ENCODE measurements at regions of chr7 and their contacts with region 1.

Region 1: GRCh38 chr7:129218514-129219062 is 6.2 kb upstream of the AHCYL2 start:
- DNase-seq: peak; percentile 90
- ATAC-seq: peak; percentile 91
- H3K4me3 Mint-ChIP-seq: no peak overlapping the region
- H3K27ac Mint-ChIP-seq: no peak overlapping the region
- H3K4me1 Mint-ChIP-seq: peaks cover 7% of the 10 kb centered on the region
- H3K27me3 Mint-ChIP-seq: peaks cover 4% of the 10 kb centered on the region
- CTCF ChIP-seq: peak; percentile 94

Region 2: DNA sequence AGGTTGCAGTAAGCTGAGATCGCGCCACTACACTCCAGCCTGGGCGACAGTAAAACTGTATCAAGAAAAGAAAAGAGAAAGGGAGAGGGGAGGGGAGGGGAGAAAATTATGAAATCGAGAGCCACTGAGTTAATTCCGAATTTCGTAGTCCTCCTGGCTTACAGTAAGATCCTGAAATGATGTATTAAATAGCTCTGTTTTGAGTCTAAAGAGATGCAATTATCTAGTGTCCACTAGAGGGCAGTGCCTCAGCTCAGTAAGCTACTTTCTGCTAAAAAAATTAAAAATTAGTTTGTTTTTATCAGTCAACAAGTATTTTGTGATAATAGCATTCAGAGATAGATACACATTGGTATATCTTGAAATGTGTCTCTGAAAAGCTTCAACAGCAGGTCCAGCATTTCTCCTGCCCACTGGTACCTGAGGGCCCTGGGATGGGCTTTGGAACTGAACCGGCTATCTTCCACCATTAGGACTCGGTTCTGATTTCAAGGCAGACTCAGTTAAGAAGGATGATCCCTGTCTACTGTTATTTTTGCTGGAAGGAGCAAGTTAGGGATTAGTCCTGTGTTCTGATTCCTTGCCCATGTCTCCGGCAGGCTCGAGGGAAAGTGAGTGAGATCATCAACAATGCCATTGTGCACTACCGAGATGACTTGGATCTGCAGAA is 54.6 kb before region 1 on chr7:
- CTCF ChIA-PET with region 1: interaction called, 198 read pairs
- POLR2A ChIA-PET with region 1: no interaction called
- intact Hi-C with region 1: no loop called
- DNase-seq: peak; percentile 37
- ATAC-seq: peak; percentile 66
- H3K4me3 Mint-ChIP-seq: no peak overlapping the region
- H3K27ac Mint-ChIP-seq: no peak overlapping the region
- H3K4me1 Mint-ChIP-seq: peaks cover 8% of the 10 kb centered on the region
- H3K27me3 Mint-ChIP-seq: no peaks in the 10 kb centered on the region
- CTCF ChIP-seq: peak; percentile 91

Region 3: GRCh38 chr7:129231666-129232065 is 13.1 kb after region 1 on chr7:
- CTCF ChIA-PET with region 1: interaction called, 38 read pairs
- POLR2A ChIA-PET with region 1: interaction called, 3 read pairs
- intact Hi-C with region 1: no loop called
- DNase-seq: no peak
- ATAC-seq: no peak
- H3K4me3 Mint-ChIP-seq: no peak overlapping the region
- H3K27ac Mint-ChIP-seq: no peak overlapping the region
- H3K4me1 Mint-ChIP-seq: peaks cover 6% of the 10 kb centered on the region
- H3K27me3 Mint-ChIP-seq: no peaks in the 10 kb centered on the region
- CTCF ChIP-seq: no peak

Region 4: DNA sequence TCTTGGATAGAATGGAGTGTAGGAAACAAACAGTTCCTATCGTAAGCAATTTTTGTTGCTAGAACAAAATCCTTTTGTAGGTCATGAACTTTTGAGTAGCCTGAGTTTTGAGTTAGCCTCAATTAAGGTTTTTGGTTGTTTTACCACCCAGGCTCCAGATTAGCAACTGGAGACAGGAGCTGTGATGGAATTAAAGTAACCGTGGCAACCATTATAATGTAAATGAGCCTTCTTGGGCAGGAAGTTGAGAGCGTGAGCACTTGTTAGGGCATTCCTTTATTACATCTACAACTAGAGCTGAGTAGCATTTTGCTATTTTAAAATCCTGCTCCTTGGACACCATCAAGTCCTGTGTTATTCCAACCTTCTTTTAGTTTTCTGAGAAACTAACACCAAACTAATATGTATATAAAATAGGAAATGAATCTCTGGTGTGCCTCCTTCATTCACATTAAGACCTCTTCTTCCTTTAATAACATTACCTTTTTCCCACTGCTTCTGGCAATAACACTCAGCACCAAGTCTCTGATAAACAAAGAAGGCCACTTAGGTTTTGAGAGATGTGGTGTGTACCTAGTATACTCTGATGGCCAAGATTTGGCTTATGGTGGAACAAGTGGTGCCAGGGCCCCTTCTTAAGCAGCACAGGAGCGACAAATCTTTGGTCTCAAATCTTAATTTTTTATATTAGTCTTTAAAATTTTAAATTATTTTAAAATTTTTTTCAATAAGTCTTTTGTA is 40.2 kb after region 1 on chr7:
- CTCF ChIA-PET with region 1: interaction called, 60 read pairs
- POLR2A ChIA-PET with region 1: interaction called, 6 read pairs
- intact Hi-C with region 1: no loop called
- DNase-seq: no peak
- ATAC-seq: no peak
- H3K4me3 Mint-ChIP-seq: no peak overlapping the region
- H3K27ac Mint-ChIP-seq: peak overlapping the region; percentile 39
- H3K4me1 Mint-ChIP-seq: peaks cover 16% of the 10 kb centered on the region
- H3K27me3 Mint-ChIP-seq: no peaks in the 10 kb centered on the region
- CTCF ChIP-seq: no peak

Region 5: GRCh38 chr7:129285111-129285510 is 66.5 kb after region 1 on chr7:
- CTCF ChIA-PET with region 1: interaction called, 31 read pairs
- POLR2A ChIA-PET with region 1: no interaction called
- intact Hi-C with region 1: no loop called
- DNase-seq: no peak
- ATAC-seq: no peak
- H3K4me3 Mint-ChIP-seq: no peak overlapping the region
- H3K27ac Mint-ChIP-seq: no peak overlapping the region
- H3K4me1 Mint-ChIP-seq: no peaks in the 10 kb centered on the region
- H3K27me3 Mint-ChIP-seq: no peaks in the 10 kb centered on the region
- CTCF ChIP-seq: no peak

Region 6: DNA sequence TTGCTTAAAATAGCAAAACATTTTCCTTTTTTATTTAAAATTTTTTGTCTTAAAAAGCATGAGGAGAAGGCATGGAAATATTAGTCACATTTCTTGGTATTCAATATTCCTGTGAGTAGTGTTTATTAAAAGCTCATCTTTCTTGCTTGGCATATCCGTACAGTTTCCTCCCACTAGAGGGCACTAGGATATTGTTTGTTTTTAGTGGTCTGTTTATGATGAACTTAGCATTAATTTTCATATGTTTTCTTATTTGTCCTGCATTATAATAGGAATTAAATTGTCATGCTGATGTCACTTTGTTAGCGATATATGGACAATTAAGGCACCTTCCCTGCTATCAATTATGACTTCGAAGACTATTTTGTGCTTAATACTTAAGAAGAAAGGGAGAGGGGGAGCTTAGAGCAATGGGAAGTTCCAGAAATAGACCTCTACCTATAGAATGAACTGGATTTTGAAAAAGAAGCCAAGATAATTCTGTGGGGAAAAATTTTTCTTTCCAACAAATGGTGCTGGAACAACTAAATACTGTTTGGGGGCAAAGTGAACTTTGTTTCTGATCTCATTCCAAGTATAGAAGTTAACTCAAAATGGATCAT is 124.6 kb after region 1 on chr7:
- CTCF ChIA-PET with region 1: interaction called, 11 read pairs
- POLR2A ChIA-PET with region 1: interaction called, 3 read pairs
- intact Hi-C with region 1: no loop called
- DNase-seq: peak; percentile 16
- ATAC-seq: peak; percentile 50
- H3K4me3 Mint-ChIP-seq: no peak overlapping the region
- H3K27ac Mint-ChIP-seq: no peak overlapping the region
- H3K4me1 Mint-ChIP-seq: peaks cover 31% of the 10 kb centered on the region
- H3K27me3 Mint-ChIP-seq: no peaks in the 10 kb centered on the region
- CTCF ChIP-seq: peak; percentile 83

Region 7: GRCh38 chr7:129468087-129468486 is 249.5 kb after region 1 on chr7:
- CTCF ChIA-PET with region 1: interaction called, 11 read pairs
- POLR2A ChIA-PET with region 1: no interaction called
- intact Hi-C with region 1: loop called (anchors 10 kb)
- DNase-seq: no peak
- ATAC-seq: no peak
- H3K4me3 Mint-ChIP-seq: no peak overlapping the region
- H3K27ac Mint-ChIP-seq: no peak overlapping the region
- H3K4me1 Mint-ChIP-seq: peaks cover 4% of the 10 kb centered on the region
- H3K27me3 Mint-ChIP-seq: no peaks in the 10 kb centered on the region
- CTCF ChIP-seq: no peak

Measured in activated CD8-positive, alpha-beta T cell treated with anti-CD3 and anti-CD28 coated beads for 36 hours (primary cell).